ENCODE measurements at regions of chr18 and their contacts with region 1.

Region 1: GRCh38 chr18:28045176-28045810 is 131.6 kb downstream of the CDH2 start:
- DNase-seq: no peak
- ATAC-seq: peak in 3 of 4 donors; percentile 30 to 75 (median 31)
- H3K4me3 ChIP-seq: no peak overlapping the region
- H3K27ac ChIP-seq: no peak overlapping the region
- H3K4me1 ChIP-seq: peaks cover 0 to 48% (median 11%) of the 10 kb centered on the region in 12 donors
- H3K27me3 ChIP-seq: no peaks in the 10 kb centered on the region
- CTCF ChIP-seq: no peak
- POLR2A ChIP-seq: no peak

Region 2: GRCh38 chr18:28095041-28095440 is 49.7 kb after region 1 on chr18:
- intact Hi-C with region 1: loop called in 1 of 10 experiments (anchors 10 kb)
- DNase-seq: no peak
- ATAC-seq: no peak
- H3K4me3 ChIP-seq: no peak overlapping the region
- H3K27ac ChIP-seq: no peak overlapping the region
- H3K4me1 ChIP-seq: peaks cover 0 to 24% (median 7%) of the 10 kb centered on the region in 12 donors
- H3K27me3 ChIP-seq: no peaks in the 10 kb centered on the region
- CTCF ChIP-seq: no peak
- POLR2A ChIP-seq: no peak

Region 3: DNA sequence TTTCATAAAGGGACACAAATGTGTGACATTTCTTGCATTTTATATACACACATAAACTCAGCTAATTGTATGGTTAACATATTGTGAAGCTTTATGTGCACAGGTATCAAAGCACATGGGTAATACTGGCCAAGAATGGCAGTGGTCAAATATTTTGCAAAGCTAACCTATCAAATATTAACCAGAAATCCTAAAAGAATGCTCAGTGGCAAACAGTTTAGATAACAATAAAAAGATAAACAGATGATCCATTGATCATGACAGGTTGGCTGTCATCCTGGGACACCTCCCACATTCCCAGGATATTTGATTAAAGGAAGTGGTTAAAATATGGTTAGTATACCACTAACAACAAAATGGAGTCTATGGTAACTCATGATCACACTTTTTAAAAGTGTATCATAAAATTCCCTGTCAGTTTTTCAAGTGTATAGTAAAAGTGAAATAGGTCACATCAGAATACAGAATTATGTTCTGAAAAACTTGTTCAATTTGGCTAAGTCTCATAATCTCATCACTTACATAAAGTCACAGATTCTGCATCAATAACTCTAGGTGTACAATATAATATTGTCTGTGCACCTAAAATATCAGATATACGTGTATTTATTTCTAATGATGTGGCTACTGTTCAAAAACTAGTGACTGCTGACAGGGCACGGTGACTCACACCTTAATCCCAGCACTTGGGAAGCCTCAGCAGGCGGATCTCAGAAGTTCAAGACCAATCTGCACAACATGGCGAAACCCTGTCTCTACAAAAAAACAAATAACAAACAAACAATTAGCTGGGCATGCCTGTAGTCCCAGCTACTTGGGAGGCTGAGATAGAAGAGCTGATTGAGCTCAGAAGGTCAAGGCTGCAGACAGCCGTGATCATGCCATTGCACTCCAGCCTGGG is 82.7 kb after region 1 on chr18:
- intact Hi-C with region 1: no loop called
- DNase-seq: no peak
- ATAC-seq: peak in 3 of 4 donors; percentile 10 to 44 (median 16)
- H3K4me3 ChIP-seq: no peak overlapping the region
- H3K27ac ChIP-seq: peak overlapping the region; percentile 50 to 97 (median 76)
- H3K4me1 ChIP-seq: peaks cover 0 to 76% (median 13%) of the 10 kb centered on the region in 12 donors
- H3K27me3 ChIP-seq: no peaks in the 10 kb centered on the region
- CTCF ChIP-seq: no peak
- POLR2A ChIP-seq: no peak

Measured in heart left ventricle (tissue), 16 donors.